Activated T-helper 2 cell treated with anti-CD3 and anti-CD28 coated beads, Interferon-gamma antibody, Interleukin-2, Interleukin-4, amounts not matched to agents 10 μg/mL and 5 μg/mL and 100 μg/mL, durations not matched to agents 14 hours and 24 hours and 36 hours (primary cell): ENCODE measurements at regions of chr11 and their contacts with region 1.

Region 1: DNA sequence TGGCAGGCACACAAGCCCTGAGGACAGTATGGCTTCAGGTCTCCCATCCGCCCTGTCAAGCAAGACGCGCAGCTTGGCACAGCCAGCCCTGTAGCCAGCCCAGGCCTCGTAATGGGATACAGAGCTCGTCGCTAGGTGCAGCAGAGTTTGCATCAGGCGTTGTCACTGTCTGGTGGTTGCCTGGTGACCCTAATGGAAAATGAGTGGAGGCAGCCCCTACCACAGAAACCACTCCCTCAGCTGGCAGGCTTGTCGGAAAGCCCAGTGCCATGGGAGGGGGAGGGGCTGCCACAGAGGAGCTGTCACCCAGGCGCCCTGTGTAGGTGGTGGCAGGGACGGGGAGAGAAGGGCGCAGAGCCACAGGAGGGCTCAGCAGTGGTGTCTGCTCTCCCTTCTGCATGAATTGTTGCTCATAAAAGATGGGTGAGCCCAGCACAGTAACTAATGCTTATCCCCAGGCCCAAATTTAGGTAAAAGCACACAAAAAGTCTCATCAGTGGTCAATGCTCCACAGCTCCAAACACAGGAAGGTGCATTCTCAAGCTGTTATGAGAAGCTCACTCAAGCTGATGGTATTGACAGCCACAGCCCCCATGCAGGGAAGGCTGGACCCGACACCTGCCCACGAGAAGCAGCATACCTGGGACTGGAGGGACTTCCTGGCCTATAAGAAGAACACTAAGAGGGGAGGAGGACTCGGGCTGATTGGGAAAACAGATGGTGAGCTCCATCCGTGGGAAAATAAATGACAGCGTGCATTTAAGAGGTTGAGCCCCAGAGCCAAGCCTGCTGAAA is 164.6 kb downstream of the ETS1 start:
- DNase-seq: peak; percentile 66
- H3K4me3 Mint-ChIP-seq: peak overlapping the region; percentile 33
- H3K27ac Mint-ChIP-seq: peak overlapping the region; percentile 96
- H3K4me1 Mint-ChIP-seq: peaks cover 43% of the 10 kb centered on the region
- H3K27me3 Mint-ChIP-seq: no peaks in the 10 kb centered on the region

Region 2: DNA sequence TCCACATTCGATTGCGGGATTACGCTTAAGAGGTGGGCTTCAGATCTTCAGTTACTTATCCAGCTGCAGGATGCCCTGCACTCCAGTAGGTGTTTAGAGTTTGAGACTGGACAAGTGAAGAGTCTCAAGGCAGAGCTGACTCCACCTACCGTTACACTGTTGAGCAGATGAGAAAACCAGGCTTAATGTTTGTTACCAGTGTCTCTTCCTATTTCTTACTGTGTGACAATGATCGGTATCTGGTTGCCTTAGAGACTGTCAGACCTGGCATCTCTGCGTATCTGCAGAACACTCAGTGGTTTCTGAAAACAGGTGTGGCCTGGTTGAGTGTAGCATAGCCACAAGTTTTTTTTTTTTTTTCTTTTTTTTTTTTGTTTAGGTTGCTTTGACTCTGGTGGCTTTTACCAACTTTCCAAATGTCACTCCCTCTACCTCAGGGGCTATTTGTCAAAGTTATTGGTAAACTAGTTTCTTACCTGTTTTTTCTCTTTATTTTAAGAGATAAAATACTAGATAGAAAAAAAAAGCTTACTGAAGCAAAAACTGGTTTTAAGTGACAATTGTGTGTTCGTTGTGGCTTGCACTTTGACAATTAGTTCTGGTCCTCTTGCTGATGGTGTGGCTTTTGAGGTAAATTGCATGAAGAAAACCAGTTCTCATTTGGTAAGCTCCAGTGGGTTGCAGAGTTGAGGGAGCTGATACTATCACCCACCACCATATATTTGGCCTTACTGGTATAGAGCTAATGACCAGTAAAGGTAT is 120.2 kb before region 1 on chr11:
- intact Hi-C with region 1: loop called (anchors 1 kb)
- DNase-seq: peak; percentile 82
- H3K4me3 Mint-ChIP-seq: peak overlapping the region; percentile 90
- H3K27ac Mint-ChIP-seq: peak overlapping the region; percentile 96
- H3K4me1 Mint-ChIP-seq: peaks cover 71% of the 10 kb centered on the region
- H3K27me3 Mint-ChIP-seq: no peaks in the 10 kb centered on the region

Region 3: GRCh38 chr11:128379587-128380580 is 42.9 kb before region 1 on chr11:
- intact Hi-C with region 1: loop called (anchors 5 kb)
- DNase-seq: peak; percentile 24
- H3K4me3 Mint-ChIP-seq: no peak overlapping the region
- H3K27ac Mint-ChIP-seq: peak overlapping the region; percentile 76
- H3K4me1 Mint-ChIP-seq: peaks cover 41% of the 10 kb centered on the region
- H3K27me3 Mint-ChIP-seq: no peaks in the 10 kb centered on the region